ENCODE measurements at regions of chr10 and their contacts with region 1.

Region 1: GRCh38 chr10:125742465-125742864 is 23.0 kb downstream of the EDRF1 start:
- DNase-seq: no peak
- H3K4me3 ChIP-seq: no peak overlapping the region
- H3K27ac ChIP-seq: no peak overlapping the region
- H3K4me1 ChIP-seq: no peaks in the 10 kb centered on the region
- H3K27me3 ChIP-seq: no peaks in the 10 kb centered on the region
- CTCF ChIP-seq: no peak
- POLR2A ChIP-seq: no peak

Region 2: GRCh38 chr10:125584954-125585353 is 157.5 kb before region 1 on chr10:
- intact Hi-C with region 1: no loop called
- DNase-seq: no peak
- H3K4me3 ChIP-seq: no peak overlapping the region
- H3K27ac ChIP-seq: no peak overlapping the region
- H3K4me1 ChIP-seq: no peaks in the 10 kb centered on the region
- H3K27me3 ChIP-seq: no peaks in the 10 kb centered on the region
- CTCF ChIP-seq: no peak
- POLR2A ChIP-seq: no peak

Region 3: DNA sequence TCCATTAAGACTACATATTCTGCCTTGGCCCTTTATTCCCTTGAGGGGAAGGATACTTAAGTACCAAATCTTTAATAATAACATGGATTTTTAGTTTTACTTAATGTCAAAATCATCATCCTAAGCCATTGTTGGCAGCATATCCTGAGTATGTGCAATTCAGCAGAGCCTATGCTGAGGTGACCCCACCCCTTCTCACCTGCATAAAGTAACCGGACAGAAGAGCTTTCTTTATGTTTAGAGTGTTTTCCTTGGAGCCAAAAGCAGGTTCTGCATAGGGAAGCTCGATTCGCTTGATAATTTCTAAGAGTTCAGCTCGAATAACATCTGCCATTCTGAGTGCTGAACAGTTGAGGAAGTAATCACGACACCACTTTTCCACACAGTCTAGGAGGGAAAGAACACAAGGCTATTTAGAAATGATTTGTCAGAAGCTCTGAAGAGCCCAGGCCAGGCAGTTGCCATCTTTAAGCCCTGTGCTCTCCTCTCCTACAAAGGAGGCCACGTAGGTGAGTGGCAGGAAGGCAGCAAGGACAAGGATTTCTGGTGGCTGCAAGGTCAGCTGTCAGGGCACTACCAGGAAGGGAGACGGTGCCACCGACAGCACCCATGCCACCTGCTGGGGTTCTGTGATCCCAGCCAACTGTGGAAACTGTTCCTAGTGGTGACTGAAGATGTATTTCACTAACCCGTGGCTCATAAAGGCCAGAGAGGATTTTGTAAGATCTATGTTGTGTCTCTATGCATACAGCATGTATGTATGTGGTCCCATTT is 96.5 kb after region 1 on chr10:
- intact Hi-C with region 1: loop called in 1 of 2 experiments (anchors 10 kb)
- DNase-seq: no peak
- H3K4me3 ChIP-seq: no peak overlapping the region
- H3K27ac ChIP-seq: no peak overlapping the region
- H3K4me1 ChIP-seq: peaks cover 0 to under 1% of the 10 kb centered on the region in 2 donors
- H3K27me3 ChIP-seq: no peaks in the 10 kb centered on the region
- CTCF ChIP-seq: no peak
- POLR2A ChIP-seq: no peak